ENCODE measurements at regions of chr11 and their contacts with region 1.

Region 1: GRCh38 chr11:12288212-12288930 is 89.0 kb upstream of the PARVA start:
- DNase-seq: peak; percentile 87
- H3K4me3 ChIP-seq: no peak overlapping the region
- H3K27ac ChIP-seq: peak overlapping the region; percentile 97
- H3K4me1 ChIP-seq: peaks cover 44% of the 10 kb centered on the region
- H3K27me3 ChIP-seq: no peaks in the 10 kb centered on the region
- CTCF ChIP-seq: peak; percentile 96 to 97
- POLR2A ChIP-seq: no peak

Region 2: DNA sequence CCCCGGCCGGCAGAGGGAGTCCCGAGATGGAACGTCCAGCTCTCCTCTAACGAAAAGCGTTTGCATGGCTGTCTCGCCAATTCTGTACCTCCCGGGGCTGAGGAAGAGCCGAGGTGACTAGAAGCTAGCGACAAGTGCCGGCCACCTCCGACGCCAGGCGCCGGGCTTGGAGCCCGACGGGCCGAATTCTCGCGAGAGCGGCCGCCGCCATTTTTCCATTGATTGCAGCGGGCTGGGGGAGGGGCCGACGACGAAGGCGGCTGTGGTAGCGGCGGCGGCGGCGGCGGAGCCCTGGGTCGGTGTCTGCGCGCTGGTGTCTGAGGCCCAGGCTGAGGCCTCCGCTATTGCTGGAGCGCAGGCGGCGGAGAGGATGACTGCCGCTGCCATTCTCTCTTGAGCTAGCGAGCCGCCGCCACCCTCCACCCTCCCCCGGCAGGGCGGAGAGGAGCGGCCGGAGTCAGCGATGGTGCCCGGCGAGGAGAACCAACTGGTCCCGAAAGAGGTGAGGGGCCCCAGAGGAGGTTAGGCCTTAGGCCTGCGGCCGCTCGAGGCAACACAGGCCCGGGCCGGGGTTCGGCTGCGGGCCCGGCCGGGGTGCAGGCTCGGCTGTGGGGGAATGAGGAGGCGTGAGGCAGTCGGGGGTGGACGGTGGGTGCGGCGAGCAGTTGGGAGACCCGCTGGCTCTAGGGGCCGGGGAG is 446.5 kb before region 1 on chr11 and contains the start of gene USP47:
- CTCF ChIA-PET with region 1: no interaction called
- POLR2A ChIA-PET with region 1: no interaction called
- dilution Hi-C with region 1: no loop called
- intact Hi-C with region 1: loop called (anchors 5 kb)
- DNase-seq: peak; percentile 87
- H3K4me3 ChIP-seq: peak within 1 kb of the TSS; percentile 81 to 97 (median 86)
- H3K27ac ChIP-seq: peak within 1 kb of the TSS; percentile 95
- H3K4me1 ChIP-seq: peaks cover 22% of the 10 kb centered on the region
- H3K27me3 ChIP-seq: no peaks in the 10 kb centered on the region
- CTCF ChIP-seq: peak; percentile 44 to 55
- POLR2A ChIP-seq: peak; percentile 97
- total RNA-seq, gene USP47: 38.0 and 41.5 TPM in 2 replicates

Region 3: GRCh38 chr11:12200279-12201010 is 87.9 kb before region 1 on chr11:
- CTCF ChIA-PET with region 1: interaction called, 9 read pairs
- POLR2A ChIA-PET with region 1: interaction called, 4 read pairs
- dilution Hi-C with region 1: no loop called
- intact Hi-C with region 1: loop called (anchors 2 kb)
- DNase-seq: peak; percentile 93
- H3K4me3 ChIP-seq: no peak overlapping the region
- H3K27ac ChIP-seq: peak overlapping the region; percentile 94
- H3K4me1 ChIP-seq: peaks cover 45% of the 10 kb centered on the region
- H3K27me3 ChIP-seq: no peaks in the 10 kb centered on the region
- CTCF ChIP-seq: no peak
- POLR2A ChIP-seq: no peak

Region 4: GRCh38 chr11:12361682-12362081 is 73.3 kb after region 1 on chr11:
- CTCF ChIA-PET with region 1: interaction called, 10 read pairs
- POLR2A ChIA-PET with region 1: no interaction called
- dilution Hi-C with region 1: no loop called
- intact Hi-C with region 1: no loop called
- DNase-seq: no peak
- H3K4me3 ChIP-seq: no peak overlapping the region
- H3K27ac ChIP-seq: no peak overlapping the region
- H3K4me1 ChIP-seq: peaks cover 2% of the 10 kb centered on the region
- H3K27me3 ChIP-seq: peaks cover 14 to 23% of the 10 kb centered on the region in 2 experiments
- CTCF ChIP-seq: no peak
- POLR2A ChIP-seq: no peak

Region 5: GRCh38 chr11:12673924-12674570 is 385.7 kb after region 1 on chr11 and contains the start of gene TEAD1:
- CTCF ChIA-PET with region 1: interaction called, 4 read pairs
- POLR2A ChIA-PET with region 1: no interaction called
- dilution Hi-C with region 1: no loop called
- intact Hi-C with region 1: loop called (anchors 5 kb)
- DNase-seq: peak; percentile 95
- H3K4me3 ChIP-seq: peak within 1 kb of the TSS; percentile 85 to 94 (median 89)
- H3K27ac ChIP-seq: peak within 1 kb of the TSS; percentile 71
- H3K4me1 ChIP-seq: peaks cover 22% of the 10 kb centered on the region
- H3K27me3 ChIP-seq: no peaks in the 10 kb centered on the region
- CTCF ChIP-seq: no peak
- POLR2A ChIP-seq: peak; percentile 87
- total RNA-seq, gene TEAD1: 43.2 and 49.0 TPM in 2 replicates

Region 6: DNA sequence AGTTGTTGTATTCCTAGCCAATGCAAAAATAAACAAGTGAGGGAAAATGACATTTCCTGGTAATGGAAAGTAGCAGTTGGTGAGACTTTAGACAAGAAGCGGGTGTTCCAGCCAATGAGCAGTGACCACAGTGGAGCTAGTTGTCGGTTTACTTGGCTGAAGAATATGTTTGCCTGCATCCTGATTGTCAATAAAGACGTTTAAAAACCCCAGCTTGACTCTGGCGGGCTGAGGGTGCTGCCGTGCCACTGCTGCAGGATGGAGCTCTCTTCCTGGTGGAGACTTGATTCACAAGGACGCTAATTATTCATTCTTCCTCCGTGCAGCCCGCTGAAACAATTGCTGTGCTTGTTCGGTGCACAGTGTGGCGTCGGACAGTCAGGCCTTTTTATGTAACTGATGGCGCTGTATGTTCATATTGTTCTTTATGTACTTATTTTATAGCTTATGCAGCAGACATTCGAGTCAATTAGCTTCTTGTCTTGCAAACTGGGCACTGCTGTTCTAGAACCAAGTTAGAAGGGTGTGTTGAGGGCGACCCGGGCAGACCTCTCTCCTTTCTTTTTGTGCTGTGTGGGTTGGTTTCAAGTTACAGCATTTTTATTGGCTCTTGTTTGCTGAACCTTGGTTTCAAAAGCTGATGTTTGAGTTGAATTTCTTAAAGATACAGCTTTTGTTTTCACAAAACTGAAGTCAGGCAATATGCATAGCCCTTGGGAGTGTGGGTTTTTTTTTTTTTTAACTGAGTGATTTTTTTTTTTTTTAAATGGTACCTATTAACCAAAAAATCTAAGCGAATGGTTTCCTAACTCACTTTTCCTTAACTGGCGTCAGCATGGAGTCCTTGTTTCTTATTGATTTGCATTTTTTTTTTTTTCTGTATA is 539.8 kb after region 1 on chr11:
- CTCF ChIA-PET with region 1: interaction called, 8 read pairs
- POLR2A ChIA-PET with region 1: no interaction called
- dilution Hi-C with region 1: no loop called
- intact Hi-C with region 1: loop called (anchors 5 kb)
- DNase-seq: peak; percentile 91
- H3K4me3 ChIP-seq: peak overlapping the region; percentile 24 to 84 (median 63)
- H3K27ac ChIP-seq: peak overlapping the region; percentile 52
- H3K4me1 ChIP-seq: peaks cover 43% of the 10 kb centered on the region
- H3K27me3 ChIP-seq: no peaks in the 10 kb centered on the region
- CTCF ChIP-seq: no peak
- POLR2A ChIP-seq: peak; percentile 73

Region 7: GRCh38 chr11:12963792-12964536 is 675.6 kb after region 1 on chr11:
- CTCF ChIA-PET with region 1: interaction called, 22 read pairs
- POLR2A ChIA-PET with region 1: no interaction called
- dilution Hi-C with region 1: no loop called
- intact Hi-C with region 1: no loop called
- DNase-seq: peak; percentile 58
- H3K4me3 ChIP-seq: no peak overlapping the region
- H3K27ac ChIP-seq: no peak overlapping the region
- H3K4me1 ChIP-seq: no peaks in the 10 kb centered on the region
- H3K27me3 ChIP-seq: peaks cover 7 to 12% of the 10 kb centered on the region in 2 experiments
- CTCF ChIP-seq: peak; percentile 78 to 81
- POLR2A ChIP-seq: no peak